ENCODE measurements at regions of chr11 and their contacts with region 1.

Region 1: DNA sequence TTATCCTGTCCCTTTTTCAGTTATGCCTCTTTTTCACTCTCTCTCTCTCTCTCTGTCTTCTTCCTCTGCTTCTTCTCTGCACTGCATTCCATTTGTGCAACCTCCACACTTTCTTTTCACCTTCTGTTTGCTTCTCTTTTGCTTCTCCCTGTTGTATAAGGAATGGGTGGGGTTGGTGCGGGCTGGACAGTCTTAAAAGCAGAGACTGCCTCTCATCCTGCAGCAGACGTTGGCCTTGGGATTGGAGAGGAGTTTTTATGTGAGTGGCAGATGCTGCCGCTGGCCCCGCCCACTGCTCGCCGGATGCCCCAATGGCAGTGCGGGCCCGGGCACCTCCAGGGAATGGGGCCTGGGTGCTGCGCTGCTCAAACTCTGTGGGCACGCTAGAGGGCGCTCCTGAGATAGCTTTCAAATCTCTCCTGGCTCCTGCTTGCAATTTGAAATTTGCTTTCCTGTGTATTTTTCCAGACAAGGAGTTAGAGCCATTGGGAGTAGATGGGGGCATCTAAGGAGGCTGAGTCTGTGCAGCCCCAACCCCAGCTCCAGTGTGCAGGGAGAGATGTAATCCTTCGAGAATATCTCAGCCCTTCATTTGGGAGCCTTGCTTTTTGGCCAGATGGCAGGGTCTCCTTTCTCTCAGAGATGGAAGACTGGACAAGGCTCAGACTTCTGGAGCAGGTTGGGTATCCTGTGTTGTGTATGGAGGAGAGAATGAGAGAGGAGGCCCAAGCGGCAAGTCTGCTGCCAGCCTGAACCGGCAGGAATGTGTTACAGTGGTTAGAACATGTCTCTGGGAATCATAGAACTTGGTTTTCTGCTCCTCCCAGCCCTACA is 81.2 kb downstream of the GRAMD1B start:
- DNase-seq: peak; percentile 77 to 90 (median 83)
- ATAC-seq: peak; percentile 77 to 93 (median 91)
- H3K4me3 ChIP-seq: no peak overlapping the region
- H3K27ac ChIP-seq: no peak overlapping the region
- H3K4me1 ChIP-seq: peaks cover 0 to 9% (median 0%) of the 10 kb centered on the region in 12 donors
- H3K27me3 ChIP-seq: no peaks in the 10 kb centered on the region
- CTCF ChIP-seq: peak; percentile 79 to 96 (median 88)
- POLR2A ChIP-seq: no peak

Region 2: GRCh38 chr11:123549926-123550917 is 39.0 kb after region 1 on chr11:
- intact Hi-C with region 1: loop called in 7 of 10 experiments (anchors 5 kb)
- DNase-seq: no peak
- ATAC-seq: no peak
- H3K4me3 ChIP-seq: no peak overlapping the region
- H3K27ac ChIP-seq: no peak overlapping the region
- H3K4me1 ChIP-seq: peaks cover 0 to 17% (median 9%) of the 10 kb centered on the region in 12 donors
- H3K27me3 ChIP-seq: no peaks in the 10 kb centered on the region
- CTCF ChIP-seq: no peak
- POLR2A ChIP-seq: no peak

Region 3: DNA sequence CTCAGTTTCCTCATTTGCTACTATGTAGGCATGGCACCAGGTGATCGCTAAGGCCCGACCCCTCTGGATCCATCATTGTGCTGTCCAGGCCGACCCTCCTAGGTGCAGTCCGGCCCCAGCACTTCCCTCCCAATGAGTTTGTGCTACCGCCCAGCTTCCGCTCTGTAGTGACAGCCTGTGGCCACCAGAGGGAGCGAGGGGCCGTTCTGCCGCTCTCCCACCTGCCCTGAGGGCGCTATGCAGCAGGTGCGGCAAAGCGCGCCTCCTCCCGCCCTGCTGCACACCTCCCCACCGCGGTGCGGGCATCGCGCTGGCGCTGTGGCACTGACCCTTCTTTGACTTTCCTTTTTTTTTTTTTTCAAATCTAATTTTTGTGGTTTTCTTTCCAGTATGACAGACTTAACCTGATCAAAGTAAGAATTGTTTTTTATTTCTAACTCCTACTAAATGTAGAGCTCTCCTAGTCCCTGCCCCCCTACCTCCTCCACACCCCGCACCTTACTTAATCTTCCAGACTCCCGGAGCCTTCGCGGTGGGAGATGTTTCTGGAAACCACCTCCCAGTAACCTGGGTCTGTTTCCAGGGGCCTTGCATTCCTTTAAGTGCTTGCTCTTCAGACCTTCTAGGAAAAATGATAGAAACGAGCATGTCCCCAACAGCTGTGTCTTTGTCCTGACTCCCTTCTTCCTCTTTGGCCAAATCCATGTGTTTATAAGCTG is 69.5 kb after region 1 on chr11:
- intact Hi-C with region 1: loop called in 9 of 10 experiments (anchors 1 to 2 kb)
- DNase-seq: peak in 4 of 5 donors; percentile 43 to 73 (median 57)
- ATAC-seq: peak; percentile 45 to 58 (median 52)
- H3K4me3 ChIP-seq: no peak overlapping the region
- H3K27ac ChIP-seq: no peak overlapping the region
- H3K4me1 ChIP-seq: peaks cover 0 to 14% (median 2%) of the 10 kb centered on the region in 12 donors
- H3K27me3 ChIP-seq: no peaks in the 10 kb centered on the region
- CTCF ChIP-seq: peak; percentile 79 to 92 (median 88)
- POLR2A ChIP-seq: no peak

Region 4: DNA sequence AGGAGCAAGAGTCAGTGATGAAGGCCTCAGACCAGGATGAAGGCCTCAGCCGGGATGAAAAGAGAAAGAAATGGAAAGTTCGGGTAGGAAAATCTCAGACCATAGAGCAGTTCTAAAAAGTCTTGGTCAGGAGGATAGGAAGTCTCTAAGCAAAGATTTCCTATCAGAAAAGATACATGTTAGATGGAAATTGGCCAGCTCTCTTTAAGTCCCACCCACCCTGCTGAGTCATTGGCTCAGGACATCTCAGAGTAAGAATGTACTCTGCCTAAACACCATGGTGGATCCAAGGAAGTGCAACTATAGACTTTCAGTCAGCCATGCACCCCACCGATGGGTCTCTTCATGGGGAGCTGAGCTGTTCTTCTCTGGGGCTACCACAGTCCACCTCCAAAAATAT is 883.2 kb after region 1 on chr11:
- intact Hi-C with region 1: no loop called
- DNase-seq: no peak
- ATAC-seq: no peak
- H3K4me3 ChIP-seq: no peak overlapping the region
- H3K27ac ChIP-seq: no peak overlapping the region
- H3K4me1 ChIP-seq: no peaks in the 10 kb centered on the region
- H3K27me3 ChIP-seq: no peaks in the 10 kb centered on the region
- CTCF ChIP-seq: no peak
- POLR2A ChIP-seq: no peak

Measured in heart left ventricle (tissue), 16 donors.